BJ (cell line): ENCODE measurements at regions of chr18 and their contacts with region 1.

Region 1: GRCh38 chr18:62425465-62426195 is 97.2 kb upstream of the ZCCHC2 start:
- DNase-seq: peak; percentile 90
- H3K4me3 ChIP-seq: peak overlapping the region; percentile 28
- H3K27me3 ChIP-seq: 0 out of 2 replicates have a peak, but pooled peaks cover 1% of the 10 kb centered on the region
- CTCF ChIP-seq: peak; percentile 84

Region 2: GRCh38 chr18:62258616-62259015 is 167.0 kb before region 1 on chr18:
- CTCF ChIA-PET with region 1: no interaction called
- POLR2A ChIA-PET with region 1: no interaction called
- DNase-seq: no peak
- H3K4me3 ChIP-seq: no peak overlapping the region
- H3K27me3 ChIP-seq: no peaks in the 10 kb centered on the region
- CTCF ChIP-seq: no peak

Region 3: DNA sequence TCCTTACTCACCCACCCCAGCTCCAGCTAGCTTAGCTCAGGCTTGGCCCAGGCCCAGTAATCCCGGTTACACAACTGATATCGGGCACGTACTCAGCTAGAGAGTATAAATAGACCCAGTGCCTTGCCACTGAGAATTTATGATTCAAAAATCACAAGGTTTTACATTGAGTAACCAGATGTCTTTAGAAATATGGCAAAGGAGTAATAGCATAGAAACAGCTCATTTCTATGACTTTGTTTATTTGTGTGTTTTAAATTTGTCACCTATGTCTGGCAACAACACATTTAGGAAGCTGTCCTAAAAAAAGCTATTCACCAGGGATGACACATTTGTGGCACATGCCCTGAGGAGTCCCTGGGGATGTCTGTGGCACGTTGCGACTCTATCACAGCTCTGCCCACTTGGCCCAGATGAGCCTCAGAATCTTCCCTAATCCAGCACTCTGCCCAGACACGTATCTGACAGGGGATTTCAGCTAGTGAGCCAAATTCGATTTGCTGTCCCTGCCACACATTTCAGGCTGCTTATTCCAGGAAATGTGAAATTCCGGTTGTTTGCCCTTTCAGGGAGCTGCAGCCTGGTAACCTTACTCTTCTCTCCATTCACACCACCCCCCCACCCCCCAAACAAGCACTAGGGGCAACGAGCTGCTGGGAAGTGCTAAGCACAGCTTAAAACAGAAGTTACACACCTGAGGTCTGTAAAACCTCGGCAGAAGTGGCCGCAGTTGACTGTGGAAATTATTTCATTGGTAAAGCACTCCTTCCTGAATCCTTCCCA is 11.8 kb after region 1 on chr18:
- CTCF ChIA-PET with region 1: interaction called, 33 read pairs
- POLR2A ChIA-PET with region 1: no interaction called
- DNase-seq: no peak
- H3K4me3 ChIP-seq: no peak overlapping the region
- H3K27me3 ChIP-seq: peaks cover 6% of the 10 kb centered on the region
- CTCF ChIP-seq: no peak

Region 4: DNA sequence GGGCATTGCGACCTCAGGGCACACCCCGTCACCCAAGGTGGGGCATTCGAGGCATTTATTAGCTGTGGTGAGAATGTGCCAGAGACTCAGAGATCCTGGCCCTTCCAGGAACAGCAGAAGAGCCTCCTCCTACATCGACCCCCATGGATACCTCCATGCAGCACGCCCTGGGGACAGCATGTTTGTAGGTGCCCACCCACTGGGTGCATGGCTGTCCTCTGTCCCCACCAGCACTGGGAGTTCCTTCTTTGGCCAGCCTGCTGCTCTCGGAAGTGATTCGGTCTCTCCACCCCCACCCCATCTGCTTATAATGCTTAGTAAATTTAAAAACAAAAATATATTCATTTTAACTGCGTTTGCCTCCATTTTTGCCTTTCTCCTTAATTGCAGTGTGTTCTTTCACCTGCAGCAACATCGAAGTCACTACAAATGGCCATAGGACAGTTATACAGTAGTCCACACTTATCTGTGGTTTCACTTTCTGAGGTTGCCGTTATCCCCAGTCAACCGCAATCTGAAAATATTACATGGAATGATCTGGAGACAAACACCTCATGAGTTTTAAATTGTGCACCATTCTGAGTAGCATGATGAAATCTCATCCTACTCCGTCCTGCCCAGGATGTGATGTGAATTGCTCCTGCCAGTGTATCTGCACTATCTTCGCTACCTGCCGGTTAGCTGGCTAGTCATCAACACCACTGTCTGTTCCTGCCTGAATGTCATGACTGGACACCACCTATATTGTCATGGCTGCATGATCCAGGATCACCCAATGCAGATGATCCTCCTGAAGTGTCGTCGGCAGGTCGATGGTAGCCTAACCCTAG is 67.6 kb after region 1 on chr18:
- CTCF ChIA-PET with region 1: no interaction called
- POLR2A ChIA-PET with region 1: no interaction called
- DNase-seq: no peak
- H3K4me3 ChIP-seq: no peak overlapping the region
- H3K27me3 ChIP-seq: peaks cover 3% of the 10 kb centered on the region; the same call in 1 of the 2 replicates
- CTCF ChIP-seq: no peak

Region 5: GRCh38 chr18:62578980-62579511 is 153.4 kb after region 1 on chr18:
- CTCF ChIA-PET with region 1: interaction called, 46 read pairs
- POLR2A ChIA-PET with region 1: no interaction called
- DNase-seq: no peak
- H3K4me3 ChIP-seq: no peak overlapping the region
- H3K27me3 ChIP-seq: no peaks in the 10 kb centered on the region
- CTCF ChIP-seq: no peak